Activated CD4-positive, alpha-beta T cell treated with anti-CD3 and anti-CD28 coated beads for 36 hours (primary cell): ENCODE measurements at regions of chr21 and their contacts with region 1.

Region 1: DNA sequence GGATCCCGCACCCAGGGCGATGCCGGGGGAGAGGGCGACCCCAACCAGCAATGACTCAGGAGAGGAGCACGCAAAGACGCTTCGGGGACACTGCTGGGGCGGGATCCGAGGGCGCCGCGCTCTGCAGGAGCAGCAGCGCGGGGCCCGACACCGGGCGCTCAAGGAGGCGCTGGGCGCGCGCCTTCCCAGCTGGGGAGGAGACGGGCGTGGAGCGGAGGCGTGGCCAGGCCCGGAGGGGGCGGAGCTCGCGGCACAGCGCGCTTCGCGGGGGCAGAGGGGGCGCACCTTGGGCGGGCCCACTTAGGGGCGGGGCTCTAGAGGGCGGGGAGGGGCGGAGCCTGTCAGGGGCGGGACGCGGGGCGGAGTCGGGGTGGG is 369 bp downstream of the SUMO3 start:
- DNase-seq: peak; percentile 97
- ATAC-seq: peak; percentile 92
- H3K4me3 Mint-ChIP-seq: peak overlapping the region; percentile 69
- H3K27ac Mint-ChIP-seq: no peak overlapping the region
- H3K4me1 Mint-ChIP-seq: peaks cover 13% of the 10 kb centered on the region
- H3K27me3 Mint-ChIP-seq: no peaks in the 10 kb centered on the region

Region 2: GRCh38 chr21:42973991-42974831 is 1843.3 kb before region 1 on chr21 and contains the start of gene PKNOX1:
- CTCF ChIA-PET with region 1: no interaction called
- POLR2A ChIA-PET with region 1: no interaction called
- intact Hi-C with region 1: loop called in 1 of 2 experiments (anchors 10 kb)
- DNase-seq: peak; percentile 100
- ATAC-seq: peak; percentile 89
- H3K4me3 Mint-ChIP-seq: peak within 1 kb of the TSS; percentile 85
- H3K27ac Mint-ChIP-seq: peak within 1 kb of the TSS; percentile 94
- H3K4me1 Mint-ChIP-seq: peaks cover 30% of the 10 kb centered on the region
- H3K27me3 Mint-ChIP-seq: no peaks in the 10 kb centered on the region
- total RNA-seq, gene PKNOX1: 13.4 to 14.8 TPM

Region 3: GRCh38 chr21:44267655-44268142 is 549.8 kb before region 1 on chr21:
- CTCF ChIA-PET with region 1: no interaction called
- POLR2A ChIA-PET with region 1: no interaction called
- intact Hi-C with region 1: no loop called
- DNase-seq: peak; percentile 52
- ATAC-seq: peak; percentile 71
- H3K4me3 Mint-ChIP-seq: no peak overlapping the region
- H3K27ac Mint-ChIP-seq: no peak overlapping the region
- H3K4me1 Mint-ChIP-seq: no peaks in the 10 kb centered on the region
- H3K27me3 Mint-ChIP-seq: no peaks in the 10 kb centered on the region

Region 4: DNA sequence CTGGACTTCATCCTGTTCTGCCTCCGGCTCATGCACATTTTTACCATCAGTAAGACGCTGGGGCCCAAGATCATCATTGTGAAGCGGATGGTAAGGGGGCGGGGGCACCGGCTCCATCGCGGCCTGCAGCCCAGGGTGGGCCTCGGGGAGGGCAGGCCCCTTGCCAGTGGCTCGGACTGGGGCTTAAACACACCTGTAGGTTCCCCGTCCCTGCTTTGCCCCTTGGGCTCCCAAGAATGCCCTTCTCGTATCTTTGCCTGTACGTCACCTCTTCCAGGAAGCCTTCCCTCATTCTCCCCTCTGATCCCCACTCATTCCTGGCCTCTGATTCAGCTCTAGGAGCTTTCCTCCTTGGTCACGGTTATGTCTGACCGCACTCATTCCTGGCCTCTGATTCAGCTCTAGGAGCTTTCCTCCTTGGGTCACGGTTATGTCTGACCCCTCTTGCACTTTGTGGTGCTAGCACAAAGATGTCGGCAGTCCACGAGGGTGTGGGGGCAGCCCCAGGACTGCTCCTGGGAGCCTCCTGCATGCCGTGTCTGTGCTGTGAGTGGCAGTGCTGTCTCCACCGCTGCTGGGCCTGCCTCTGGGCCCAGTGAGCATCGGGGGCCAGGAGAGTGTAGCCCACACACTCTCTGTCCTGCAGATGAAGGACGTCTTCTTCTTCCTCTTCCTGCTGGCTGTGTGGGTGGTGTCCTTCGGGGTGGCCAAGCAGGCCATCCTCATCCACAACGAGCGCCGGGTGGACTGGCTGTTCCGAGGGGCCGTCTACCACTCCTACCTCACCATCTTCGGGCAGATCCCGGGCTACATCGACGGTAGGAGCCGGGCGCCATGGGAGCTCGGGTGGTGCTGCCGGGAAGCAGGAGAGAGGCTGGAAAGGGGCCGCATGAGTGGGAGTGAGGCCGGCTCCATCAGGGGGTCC is 411.3 kb before region 1 on chr21:
- CTCF ChIA-PET with region 1: no interaction called
- POLR2A ChIA-PET with region 1: no interaction called
- intact Hi-C with region 1: no loop called
- DNase-seq: no peak
- ATAC-seq: no peak
- H3K4me3 Mint-ChIP-seq: no peak overlapping the region
- H3K27ac Mint-ChIP-seq: no peak overlapping the region
- H3K4me1 Mint-ChIP-seq: peaks cover 7% of the 10 kb centered on the region
- H3K27me3 Mint-ChIP-seq: no peaks in the 10 kb centered on the region

Region 5: GRCh38 chr21:44454747-44455523 is 362.6 kb before region 1 on chr21 and contains the start of gene LRRC3:
- CTCF ChIA-PET with region 1: no interaction called
- POLR2A ChIA-PET with region 1: no interaction called
- intact Hi-C with region 1: loop called in 1 of 2 experiments (anchors 1 kb)
- DNase-seq: peak; percentile 95
- ATAC-seq: peak; percentile 74
- H3K4me3 Mint-ChIP-seq: peak within 1 kb of the TSS; percentile 67
- H3K27ac Mint-ChIP-seq: no peak within 1 kb of the TSS
- H3K4me1 Mint-ChIP-seq: no peaks in the 10 kb centered on the region
- H3K27me3 Mint-ChIP-seq: peaks cover 15% of the 10 kb centered on the region
- total RNA-seq, gene LRRC3: 2.7 to 2.9 TPM

Region 6: GRCh38 chr21:44829507-44830092 is 12.1 kb after region 1 on chr21:
- CTCF ChIA-PET with region 1: interaction called, 3 read pairs
- POLR2A ChIA-PET with region 1: no interaction called
- intact Hi-C with region 1: loop called in 1 of 2 experiments (anchors 1 kb)
- DNase-seq: peak; percentile 41
- ATAC-seq: peak; percentile 87
- H3K4me3 Mint-ChIP-seq: no peak overlapping the region
- H3K27ac Mint-ChIP-seq: peak overlapping the region; percentile 67
- H3K4me1 Mint-ChIP-seq: peaks cover 27% of the 10 kb centered on the region
- H3K27me3 Mint-ChIP-seq: no peaks in the 10 kb centered on the region

Region 7: GRCh38 chr21:44854664-44855446 is 37.4 kb after region 1 on chr21:
- CTCF ChIA-PET with region 1: no interaction called
- POLR2A ChIA-PET with region 1: no interaction called
- intact Hi-C with region 1: no loop called
- DNase-seq: peak; percentile 44
- ATAC-seq: peak; percentile 63
- H3K4me3 Mint-ChIP-seq: peak overlapping the region; percentile 24
- H3K27ac Mint-ChIP-seq: peak overlapping the region; percentile 60
- H3K4me1 Mint-ChIP-seq: peaks cover 51% of the 10 kb centered on the region
- H3K27me3 Mint-ChIP-seq: no peaks in the 10 kb centered on the region

Region 8: GRCh38 chr21:44920694-44921604 is 103.5 kb after region 1 on chr21 and contains the start of gene ITGB2:
- CTCF ChIA-PET with region 1: no interaction called
- POLR2A ChIA-PET with region 1: interaction called, 10 read pairs
- intact Hi-C with region 1: no loop called
- DNase-seq: peak; percentile 85
- ATAC-seq: peak; percentile 73
- H3K4me3 Mint-ChIP-seq: peak within 1 kb of the TSS; percentile 90
- H3K27ac Mint-ChIP-seq: peak within 1 kb of the TSS; percentile 96
- H3K4me1 Mint-ChIP-seq: peaks cover 72% of the 10 kb centered on the region
- H3K27me3 Mint-ChIP-seq: no peaks in the 10 kb centered on the region
- total RNA-seq, gene ITGB2: 217 to 250 TPM

Region 9: GRCh38 chr21:45074048-45074817 is 256.7 kb after region 1 on chr21 and contains the start of gene ADARB1:
- CTCF ChIA-PET with region 1: no interaction called
- POLR2A ChIA-PET with region 1: no interaction called
- intact Hi-C with region 1: loop called in 1 of 2 experiments (anchors 1 kb)
- DNase-seq: peak; percentile 75
- ATAC-seq: peak; percentile 13
- H3K4me3 Mint-ChIP-seq: peak within 1 kb of the TSS; percentile 88
- H3K27ac Mint-ChIP-seq: peak within 1 kb of the TSS; percentile 91
- H3K4me1 Mint-ChIP-seq: peaks cover 42% of the 10 kb centered on the region
- H3K27me3 Mint-ChIP-seq: no peaks in the 10 kb centered on the region
- total RNA-seq, gene ADARB1: 32.8 to 37.7 TPM

Region 10: GRCh38 chr21:45287438-45288391 is 470.2 kb after region 1 on chr21 and contains the start of gene POFUT2:
- CTCF ChIA-PET with region 1: no interaction called
- POLR2A ChIA-PET with region 1: no interaction called
- intact Hi-C with region 1: loop called in 1 of 2 experiments (anchors 1 kb)
- DNase-seq: peak; percentile 99
- ATAC-seq: peak; percentile 86
- H3K4me3 Mint-ChIP-seq: peak within 1 kb of the TSS; percentile 75
- H3K27ac Mint-ChIP-seq: no peak within 1 kb of the TSS
- H3K4me1 Mint-ChIP-seq: peaks cover 15% of the 10 kb centered on the region
- H3K27me3 Mint-ChIP-seq: no peaks in the 10 kb centered on the region
- total RNA-seq, gene POFUT2: 14.7 to 14.9 TPM